ENCODE measurements at regions of chr4 and their contacts with region 1.

Region 1: DNA sequence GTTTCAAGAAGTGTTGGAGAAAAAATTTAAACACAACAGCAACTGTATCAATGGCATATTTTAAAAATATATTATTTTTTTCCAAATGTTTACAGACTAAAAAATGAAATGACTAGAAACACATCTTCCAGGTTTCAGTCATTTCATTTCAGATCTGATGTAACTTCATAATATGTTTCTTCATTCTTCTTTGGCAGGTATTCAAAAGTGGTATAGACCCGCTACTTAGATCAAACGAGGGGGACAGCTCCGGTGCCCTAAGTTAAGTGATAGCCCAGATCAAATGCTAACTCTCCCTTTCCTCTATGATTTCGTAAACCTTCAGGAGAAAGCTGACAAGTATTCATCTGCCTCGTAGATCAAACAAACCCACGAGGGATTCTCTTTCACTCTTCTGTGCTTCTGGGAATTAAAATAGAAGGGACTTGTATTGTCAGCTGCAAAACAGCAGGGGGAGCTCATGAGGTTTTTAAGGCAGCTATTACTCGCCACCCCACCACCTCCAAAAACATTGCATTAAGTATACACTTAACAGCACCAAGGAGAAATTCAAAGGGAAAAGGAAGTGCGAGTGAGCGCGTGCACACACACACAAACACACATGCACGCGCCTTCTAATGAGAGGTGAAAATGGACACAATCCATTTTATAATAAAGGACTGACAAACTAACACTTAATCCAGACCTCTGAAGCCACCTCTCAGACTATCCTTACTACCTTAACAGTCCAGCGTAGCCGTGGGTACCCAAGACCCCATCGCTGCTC is 21.4 kb downstream of the HELT start:
- DNase-seq: no peak
- ATAC-seq: peak; percentile 74
- H3K4me3 Mint-ChIP-seq: peak overlapping the region; percentile 24
- H3K27ac Mint-ChIP-seq: no peak overlapping the region
- H3K4me1 Mint-ChIP-seq: peaks cover 5% of the 10 kb centered on the region
- H3K27me3 Mint-ChIP-seq: peaks cover 10% of the 10 kb centered on the region
- CTCF ChIP-seq: no peak

Region 2: GRCh38 chr4:184994010-184994622 is 45.6 kb before region 1 on chr4:
- CTCF ChIA-PET with region 1: no interaction called
- POLR2A ChIA-PET with region 1: no interaction called
- intact Hi-C with region 1: no loop called
- DNase-seq: no peak
- ATAC-seq: no peak
- H3K4me3 Mint-ChIP-seq: no peak overlapping the region
- H3K27ac Mint-ChIP-seq: no peak overlapping the region
- H3K4me1 Mint-ChIP-seq: no peaks in the 10 kb centered on the region
- H3K27me3 Mint-ChIP-seq: no peaks in the 10 kb centered on the region
- CTCF ChIP-seq: no peak

Region 3: GRCh38 chr4:185096032-185096653 is 56.5 kb after region 1 on chr4:
- CTCF ChIA-PET with region 1: interaction called, 8 read pairs
- POLR2A ChIA-PET with region 1: no interaction called
- intact Hi-C with region 1: loop called (anchors 2 kb)
- DNase-seq: no peak
- ATAC-seq: no peak
- H3K4me3 Mint-ChIP-seq: no peak overlapping the region
- H3K27ac Mint-ChIP-seq: no peak overlapping the region
- H3K4me1 Mint-ChIP-seq: no peaks in the 10 kb centered on the region
- H3K27me3 Mint-ChIP-seq: peaks cover 18% of the 10 kb centered on the region
- CTCF ChIP-seq: no peak

Region 4: GRCh38 chr4:185134307-185134869 is 94.7 kb after region 1 on chr4:
- CTCF ChIA-PET with region 1: interaction called, 24 read pairs
- POLR2A ChIA-PET with region 1: no interaction called
- intact Hi-C with region 1: loop called (anchors 1 kb)
- DNase-seq: no peak
- ATAC-seq: peak; percentile 56
- H3K4me3 Mint-ChIP-seq: no peak overlapping the region
- H3K27ac Mint-ChIP-seq: no peak overlapping the region
- H3K4me1 Mint-ChIP-seq: no peaks in the 10 kb centered on the region
- H3K27me3 Mint-ChIP-seq: peaks cover 9% of the 10 kb centered on the region
- CTCF ChIP-seq: no peak

Region 5: DNA sequence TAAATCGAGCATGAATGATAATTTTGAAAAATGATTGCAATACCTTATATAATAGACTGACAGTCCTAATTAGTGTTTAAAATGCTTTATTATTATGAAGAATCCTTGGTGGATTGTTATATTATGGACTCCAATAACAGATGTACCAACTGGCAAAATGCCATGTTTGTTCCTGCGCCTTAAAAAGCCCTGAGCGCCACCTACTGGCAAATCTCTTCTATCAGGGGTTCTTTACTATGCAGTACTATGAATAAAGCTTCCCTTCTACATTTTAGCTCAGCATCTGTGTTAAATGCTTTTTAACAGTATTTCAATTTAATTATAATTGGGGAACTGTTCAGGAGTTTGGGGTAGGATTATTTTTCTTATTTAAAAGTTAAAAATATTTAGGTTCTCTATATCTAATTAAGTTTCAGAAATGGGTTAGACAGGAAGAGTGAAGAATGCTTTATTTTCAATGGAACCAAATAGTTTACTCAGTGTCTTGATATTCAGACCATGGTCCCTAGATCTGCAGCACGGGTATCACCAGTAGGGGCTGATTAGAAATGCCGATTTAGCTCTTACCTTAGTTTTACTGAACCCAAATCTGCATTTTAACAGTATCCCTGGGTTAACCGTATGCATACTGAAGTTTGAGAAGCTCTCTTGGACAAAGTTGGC is 144.1 kb after region 1 on chr4:
- CTCF ChIA-PET with region 1: interaction called, 32 read pairs
- POLR2A ChIA-PET with region 1: no interaction called
- intact Hi-C with region 1: loop called (anchors 1 kb)
- DNase-seq: no peak
- ATAC-seq: peak; percentile 66
- H3K4me3 Mint-ChIP-seq: no peak overlapping the region
- H3K27ac Mint-ChIP-seq: no peak overlapping the region
- H3K4me1 Mint-ChIP-seq: peaks cover 9% of the 10 kb centered on the region
- H3K27me3 Mint-ChIP-seq: no peaks in the 10 kb centered on the region
- CTCF ChIP-seq: peak; percentile 72

Region 6: DNA sequence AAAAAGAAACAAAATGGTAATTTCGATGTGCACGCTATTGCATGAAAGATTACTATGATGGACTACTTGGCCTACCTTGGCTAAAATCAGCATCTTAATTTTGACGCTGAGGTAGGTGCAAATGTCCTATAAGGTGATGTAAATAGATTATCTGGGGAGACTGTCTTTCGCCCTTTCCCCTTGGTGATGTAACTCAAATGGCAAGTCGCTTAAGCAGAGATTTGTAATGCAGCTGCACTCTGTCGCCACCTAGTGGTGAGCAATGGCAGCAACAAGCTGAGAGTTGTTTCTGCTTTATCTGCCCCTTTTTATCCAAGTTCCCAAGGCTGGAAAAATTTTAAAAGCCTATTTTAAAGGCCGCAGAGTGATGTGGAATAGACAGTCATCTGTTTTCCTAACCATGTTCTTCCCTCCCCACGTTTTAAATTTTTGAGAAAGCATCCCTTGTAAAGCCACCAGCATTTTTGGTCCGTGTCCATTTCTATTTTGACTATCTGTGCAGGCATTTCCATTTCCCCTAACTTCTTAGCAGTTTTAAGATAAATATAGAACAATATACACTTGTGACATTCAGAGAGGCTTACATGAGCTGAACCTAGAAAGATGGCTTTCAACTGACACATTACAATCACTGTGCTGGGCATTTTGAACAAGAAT is 558.0 kb after region 1 on chr4:
- CTCF ChIA-PET with region 1: interaction called, 7 read pairs
- POLR2A ChIA-PET with region 1: no interaction called
- intact Hi-C with region 1: loop called (anchors 1 kb)
- DNase-seq: peak; percentile 49
- ATAC-seq: peak; percentile 72
- H3K4me3 Mint-ChIP-seq: no peak overlapping the region
- H3K27ac Mint-ChIP-seq: no peak overlapping the region
- H3K4me1 Mint-ChIP-seq: no peaks in the 10 kb centered on the region
- H3K27me3 Mint-ChIP-seq: peaks cover 19% of the 10 kb centered on the region
- CTCF ChIP-seq: peak; percentile 100